ENCODE measurements at regions of chr5 and their contacts with region 1.

Region 1: GRCh38 chr5:117013280-117013877 is 438.8 kb upstream of the SEMA6A start:
- DNase-seq: no peak
- H3K4me3 ChIP-seq: no peak overlapping the region
- H3K27ac ChIP-seq: no peak overlapping the region
- H3K4me1 ChIP-seq: no peaks in the 10 kb centered on the region
- H3K27me3 ChIP-seq: no peaks in the 10 kb centered on the region
- CTCF ChIP-seq: no peak
- EP300 ChIP-seq: no peak
- POLR2A ChIP-seq: no peak

Region 2: DNA sequence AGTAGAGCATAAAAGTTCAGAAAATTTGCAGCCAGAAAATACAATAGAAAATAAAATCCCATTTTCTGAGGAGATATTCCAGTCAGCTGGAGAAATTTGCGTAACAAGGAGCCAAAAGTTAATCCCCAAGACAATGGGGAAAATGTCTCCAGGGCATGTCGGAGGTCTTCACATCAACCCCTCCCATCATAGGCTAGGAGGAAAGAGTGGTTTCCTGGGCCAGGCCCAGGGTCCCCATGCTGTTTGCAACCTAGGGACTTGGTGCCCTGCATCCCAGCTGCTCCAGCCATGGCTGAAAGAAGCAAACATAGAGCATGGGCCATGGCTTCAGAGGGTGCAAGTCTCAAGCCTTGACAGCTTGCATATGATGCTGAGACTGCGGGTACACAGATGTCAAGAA is 1720.0 kb after region 1 on chr5:
- in situ Hi-C with region 1: no loop called
- intact Hi-C with region 1: loop called (anchors 5 kb)
- DNase-seq: no peak
- H3K4me3 ChIP-seq: no peak overlapping the region
- H3K27ac ChIP-seq: no peak overlapping the region
- H3K4me1 ChIP-seq: no peaks in the 10 kb centered on the region
- H3K27me3 ChIP-seq: no peaks in the 10 kb centered on the region
- CTCF ChIP-seq: no peak
- EP300 ChIP-seq: no peak
- POLR2A ChIP-seq: no peak